H1 (cell line): ENCODE measurements at regions of chr4 and their contacts with region 1.

Region 1: DNA sequence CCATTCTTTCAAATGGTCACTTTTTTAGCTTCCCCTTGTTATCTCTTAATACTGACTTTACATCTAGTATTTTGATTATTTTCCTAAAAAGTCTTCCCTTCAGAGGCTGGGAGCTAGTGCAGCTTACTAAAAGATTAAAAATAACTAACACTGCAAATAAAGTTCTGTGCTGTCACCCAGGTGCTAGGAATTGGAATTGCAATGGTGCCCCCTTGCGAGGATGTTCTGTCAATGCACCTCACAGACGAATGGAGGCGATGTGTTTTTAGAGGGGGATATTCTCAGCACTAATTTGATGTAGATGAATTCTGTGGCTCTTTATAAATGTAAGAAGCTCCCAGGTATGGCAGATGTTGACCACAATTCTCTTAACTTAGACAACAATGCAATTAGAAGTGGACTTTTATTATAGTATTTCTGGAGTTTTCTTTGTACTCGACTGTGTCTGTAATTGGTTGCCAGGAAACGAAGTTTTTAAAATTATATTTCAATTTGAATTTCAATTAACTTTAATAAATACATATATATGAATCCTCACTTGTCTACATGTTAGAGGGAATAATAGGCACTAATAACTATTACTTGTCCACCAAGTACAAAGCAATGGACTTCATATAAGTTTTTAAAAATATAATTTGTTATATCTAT is 22.0 kb upstream of the SMIM31 start:
- DNase-seq: peak; percentile 17 to 82
- H3K4me3 ChIP-seq: no peak overlapping the region
- H3K27ac ChIP-seq: no peak overlapping the region
- H3K4me1 ChIP-seq: no peaks in the 10 kb centered on the region
- H3K27me3 ChIP-seq: no peaks in the 10 kb centered on the region
- CTCF ChIP-seq: peak; percentile 72 to 88 (median 84)
- EP300 ChIP-seq: no peak
- POLR2A ChIP-seq: no peak
- RAD21 ChIP-seq: peak; percentile 97

Region 2: DNA sequence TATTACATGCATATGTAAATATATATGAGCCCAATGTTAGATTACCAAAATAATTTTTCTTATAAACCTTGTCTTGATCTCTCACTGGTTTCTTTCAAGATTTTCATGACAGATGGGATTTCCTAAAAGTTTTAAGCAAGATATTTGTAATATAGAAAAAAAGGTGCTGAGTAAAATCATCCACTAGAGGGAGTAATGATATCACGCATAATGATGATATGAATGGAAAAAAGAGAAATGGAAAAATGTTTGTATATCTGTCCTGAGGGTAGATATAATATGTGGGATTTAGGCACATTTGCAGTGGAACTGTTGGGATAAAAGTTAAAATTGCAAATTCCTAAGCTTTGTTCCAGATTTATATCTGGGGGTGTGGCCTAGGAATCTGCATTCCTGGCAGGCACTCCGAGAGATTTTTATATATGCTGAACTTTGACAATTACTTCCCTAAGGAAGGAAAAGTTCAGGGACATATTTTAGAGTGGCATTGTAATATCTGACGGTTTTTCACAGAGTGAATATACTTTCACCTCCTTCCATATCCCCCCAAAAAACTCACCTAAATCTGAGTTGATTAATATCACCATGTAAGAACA is 1177.0 kb before region 1 on chr4:
- CTCF ChIA-PET with region 1: interaction called, 13 read pairs
- POLR2A ChIA-PET with region 1: no interaction called
- DNase-seq: no peak
- H3K4me3 ChIP-seq: no peak overlapping the region
- H3K27ac ChIP-seq: no peak overlapping the region
- H3K4me1 ChIP-seq: no peaks in the 10 kb centered on the region
- H3K27me3 ChIP-seq: no peaks in the 10 kb centered on the region
- CTCF ChIP-seq: peak in 2 of 3 experiments; percentile 15 to 46; a peak in 2 of 4 replicates
- EP300 ChIP-seq: no peak
- POLR2A ChIP-seq: no peak
- RAD21 ChIP-seq: peak in 1 of 2 experiments; percentile 70

Region 3: DNA sequence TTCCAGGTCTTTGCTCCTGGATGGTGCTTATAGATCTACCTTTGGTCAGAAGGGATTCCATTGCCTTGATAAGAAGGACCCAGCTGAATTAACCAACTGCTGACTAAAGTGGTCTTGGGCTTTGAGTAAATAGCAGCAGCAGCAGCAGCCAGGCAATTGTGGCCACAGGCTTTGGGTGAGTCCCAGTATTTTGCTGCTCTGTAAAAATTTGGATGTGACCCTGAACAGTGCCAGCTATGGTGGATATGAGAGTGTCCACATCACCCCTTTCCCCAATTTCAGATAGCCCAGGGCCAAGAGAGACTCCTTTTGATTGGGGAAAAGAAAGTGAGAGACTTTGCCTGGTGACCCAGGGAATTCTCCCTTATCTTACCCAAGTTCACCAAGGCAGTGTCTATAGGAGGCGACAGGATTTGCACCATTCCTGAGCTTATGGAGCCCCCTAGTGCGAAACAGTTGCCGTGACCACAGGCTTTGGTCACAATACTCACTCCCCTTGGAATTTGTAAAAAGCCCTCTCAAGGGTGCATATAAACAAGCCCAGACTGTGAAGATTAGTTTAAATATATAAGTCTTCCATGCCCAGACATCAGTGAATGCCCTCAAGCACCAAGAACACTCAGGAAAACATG is 719.4 kb before region 1 on chr4:
- CTCF ChIA-PET with region 1: interaction called, 19 read pairs
- POLR2A ChIA-PET with region 1: no interaction called
- DNase-seq: peak; percentile 23 to 56
- H3K4me3 ChIP-seq: no peak overlapping the region
- H3K27ac ChIP-seq: no peak overlapping the region
- H3K4me1 ChIP-seq: no peaks in the 10 kb centered on the region
- H3K27me3 ChIP-seq: no peaks in the 10 kb centered on the region
- CTCF ChIP-seq: peak; percentile 69 to 92 (median 87)
- EP300 ChIP-seq: peak in 1 of 2 experiments; percentile 44; a peak in 1 of 3 replicates
- POLR2A ChIP-seq: no peak
- RAD21 ChIP-seq: peak; percentile 98 to 99

Region 4: DNA sequence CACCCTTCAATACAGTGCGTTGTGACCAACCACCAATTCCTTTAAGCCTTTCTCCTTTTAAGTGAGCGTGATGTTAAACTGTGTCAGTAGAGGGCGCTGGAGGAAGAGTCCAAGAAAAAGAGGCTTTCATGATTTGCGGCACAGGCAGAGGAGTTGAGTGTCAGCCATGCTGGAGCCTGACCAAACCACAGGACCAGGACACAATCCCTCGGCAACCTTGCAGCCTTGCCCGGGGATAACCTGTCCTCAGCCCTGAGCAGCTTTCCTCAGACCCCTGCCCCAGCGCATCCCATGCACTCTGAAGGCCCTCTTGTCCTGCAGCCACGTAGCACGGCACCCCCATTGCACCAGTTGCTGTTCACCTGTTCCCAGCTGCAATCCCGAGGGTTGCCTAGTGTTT is 31.5 kb before region 1 on chr4:
- CTCF ChIA-PET with region 1: interaction called, 24 read pairs
- POLR2A ChIA-PET with region 1: no interaction called
- DNase-seq: peak; percentile 44 to 81
- H3K4me3 ChIP-seq: no peak overlapping the region
- H3K27ac ChIP-seq: no peak overlapping the region
- H3K4me1 ChIP-seq: no peaks in the 10 kb centered on the region
- H3K27me3 ChIP-seq: no peaks in the 10 kb centered on the region
- CTCF ChIP-seq: peak in 2 of 3 experiments; percentile 59 to 84; a peak in 3 of 4 replicates
- EP300 ChIP-seq: no peak
- POLR2A ChIP-seq: no peak
- RAD21 ChIP-seq: peak; percentile 62 to 76

Region 5: DNA sequence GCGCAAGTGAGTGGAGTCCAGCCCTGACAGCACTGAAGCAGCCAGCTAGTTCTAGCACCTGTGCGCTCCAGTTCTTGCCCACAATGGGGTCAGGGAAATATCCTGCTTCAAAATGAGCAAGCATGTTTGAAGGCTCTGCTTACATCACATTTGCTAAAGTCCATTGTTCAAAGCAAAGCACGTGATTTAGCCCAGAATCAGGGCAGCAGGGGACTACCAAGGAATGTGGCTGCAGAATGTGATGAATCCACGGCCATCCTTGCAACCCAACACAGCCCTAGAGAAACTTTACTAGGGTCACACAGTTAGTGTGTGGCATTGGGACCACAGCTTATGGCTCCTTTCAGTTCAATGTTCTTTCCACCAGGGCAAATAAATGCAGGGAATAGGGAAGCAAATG is 25.3 kb before region 1 on chr4:
- CTCF ChIA-PET with region 1: interaction called, 161 read pairs
- POLR2A ChIA-PET with region 1: no interaction called
- DNase-seq: no peak
- H3K4me3 ChIP-seq: no peak overlapping the region
- H3K27ac ChIP-seq: no peak overlapping the region
- H3K4me1 ChIP-seq: peaks cover 3 to 7% (median 4%) of the 10 kb centered on the region in 4 experiments; a peak in 4 of 7 replicates
- H3K27me3 ChIP-seq: peaks cover 0 to 2% (median 0%) of the 10 kb centered on the region in 4 experiments; a peak in 1 of 7 replicates
- CTCF ChIP-seq: no peak
- EP300 ChIP-seq: no peak
- POLR2A ChIP-seq: no peak
- RAD21 ChIP-seq: no peak

Region 6: DNA sequence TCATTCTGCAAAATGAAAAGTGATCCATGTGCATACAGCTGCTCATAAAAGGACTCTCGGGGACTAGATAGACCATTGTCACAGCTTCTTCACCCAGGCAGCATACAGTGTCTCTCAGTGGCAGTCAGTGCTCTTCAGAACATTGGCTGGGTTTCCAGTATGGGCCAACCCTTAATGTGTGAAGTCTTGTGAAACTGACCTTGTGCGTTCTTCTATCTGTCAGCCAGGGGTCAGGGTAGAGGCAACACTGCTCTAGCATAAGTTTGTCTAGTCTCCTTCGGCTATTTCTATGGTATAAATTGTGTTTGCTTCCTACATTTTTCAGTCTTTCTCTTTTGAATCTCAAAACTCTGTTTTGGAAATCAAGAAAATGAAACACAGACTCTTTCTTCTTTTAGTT is 15.1 kb before region 1 on chr4:
- CTCF ChIA-PET with region 1: interaction called, 161 read pairs
- POLR2A ChIA-PET with region 1: no interaction called
- DNase-seq: no peak
- H3K4me3 ChIP-seq: no peak overlapping the region
- H3K27ac ChIP-seq: no peak overlapping the region
- H3K4me1 ChIP-seq: no peaks in the 10 kb centered on the region
- H3K27me3 ChIP-seq: no peaks in the 10 kb centered on the region
- CTCF ChIP-seq: peak; percentile 20 to 78 (median 54)
- EP300 ChIP-seq: no peak
- POLR2A ChIP-seq: no peak
- RAD21 ChIP-seq: peak; percentile 48 to 52

Region 7: GRCh38 chr4:164748375-164748774 is 16.4 kb after region 1 on chr4:
- CTCF ChIA-PET with region 1: interaction called, 10 read pairs
- POLR2A ChIA-PET with region 1: no interaction called
- DNase-seq: no peak
- H3K4me3 ChIP-seq: no peak overlapping the region
- H3K27ac ChIP-seq: no peak overlapping the region
- H3K4me1 ChIP-seq: no peaks in the 10 kb centered on the region
- H3K27me3 ChIP-seq: no peaks in the 10 kb centered on the region
- CTCF ChIP-seq: peak in 1 of 3 experiments; percentile 7; a peak in 1 of 4 replicates
- EP300 ChIP-seq: no peak
- POLR2A ChIP-seq: no peak
- RAD21 ChIP-seq: peak in 1 of 2 experiments; percentile 39